Posterior vena cava (tissue), 2 donors: ENCODE measurements at regions of chr3 and their contacts with region 1.

Region 1: DNA sequence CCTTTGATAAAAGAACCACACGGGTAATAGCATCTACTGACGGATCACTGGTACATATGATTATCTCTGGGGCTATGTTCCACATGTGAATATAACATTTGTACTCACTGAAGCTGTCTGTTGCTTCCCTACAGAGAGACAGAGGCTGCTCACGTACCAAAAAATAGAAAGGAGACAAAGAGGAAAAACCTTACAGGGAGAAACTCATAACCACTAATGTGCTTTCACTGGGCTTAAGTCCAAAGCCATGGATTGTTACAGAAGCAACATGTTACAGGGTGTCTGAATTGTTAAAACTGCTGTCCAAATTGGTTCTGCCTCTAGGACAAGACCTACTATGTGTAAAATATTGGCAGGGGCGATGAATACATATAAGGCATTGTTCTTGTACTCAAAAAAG is 311.9 kb downstream of the FOXP1 start:
- DNase-seq: no peak

Region 2: DNA sequence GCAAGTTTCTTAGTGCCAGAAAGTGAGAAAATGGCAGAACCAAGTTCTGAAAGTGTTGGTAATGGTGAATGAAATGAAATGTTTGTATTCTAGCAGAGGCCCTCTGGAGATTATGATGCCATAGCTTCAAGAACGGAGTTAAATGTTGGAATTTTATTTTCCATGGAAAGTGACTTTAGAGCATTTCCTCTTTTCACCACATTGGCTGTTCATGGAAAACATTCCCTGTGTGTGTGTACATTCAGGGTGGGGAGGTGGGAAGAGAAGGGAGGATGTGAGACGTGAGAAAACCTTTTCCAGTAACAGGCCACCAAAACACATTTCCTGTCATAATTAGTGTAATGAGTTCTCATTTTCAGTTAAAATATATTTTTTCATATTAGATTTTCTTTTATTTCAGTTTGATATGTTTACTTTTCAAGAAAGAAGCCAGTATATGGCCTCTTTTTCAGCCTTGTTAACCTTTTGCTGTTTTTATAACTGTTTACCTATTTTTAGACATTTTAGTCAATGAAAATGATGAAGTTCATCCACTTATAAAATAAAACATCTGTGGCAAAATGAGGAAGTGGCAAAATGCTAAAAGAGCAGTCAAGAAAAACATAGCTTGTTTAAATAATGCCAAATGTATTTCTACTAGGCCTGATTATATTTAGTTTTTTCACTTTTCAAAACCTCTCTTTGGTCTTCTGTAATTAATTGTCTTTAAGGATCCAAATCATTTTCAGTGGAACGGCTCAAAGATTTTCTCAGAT is 1250.5 kb before region 1 on chr3:
- intact Hi-C with region 1: no loop called
- DNase-seq: no peak

Region 3: GRCh38 chr3:71229905-71230657 is 41.5 kb before region 1 on chr3:
- intact Hi-C with region 1: loop called in 1 of 2 experiments (anchors 1 kb)
- DNase-seq: no peak

Region 4: DNA sequence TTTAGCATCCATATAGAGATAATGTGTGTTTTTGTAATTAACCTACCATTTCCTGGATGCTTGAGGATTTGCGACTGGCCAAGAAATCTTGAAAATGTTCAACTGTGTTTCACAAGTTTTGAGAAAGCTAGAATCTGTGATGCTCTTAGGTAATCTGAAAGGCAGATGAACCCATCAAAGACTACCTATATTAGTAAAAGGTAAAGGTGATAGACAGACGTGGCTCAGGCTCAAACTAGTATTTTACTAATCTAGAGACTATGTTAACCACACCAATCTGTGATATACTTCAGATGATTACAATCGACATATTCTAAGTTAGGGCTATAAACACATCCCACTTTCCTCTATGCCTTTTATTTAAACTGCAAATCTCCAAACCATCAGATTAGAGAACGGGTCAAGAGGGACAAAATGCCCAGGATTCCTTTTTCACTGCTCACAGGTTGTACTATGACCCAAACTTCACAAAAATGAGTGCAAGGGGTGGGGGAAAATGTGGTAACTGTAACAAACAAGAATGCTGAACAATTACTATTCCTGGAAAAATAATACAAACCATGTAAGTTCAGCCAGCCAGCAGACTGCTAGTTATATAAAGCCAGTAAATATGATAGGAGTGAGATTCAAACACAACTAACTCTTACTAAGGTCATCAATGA is 16.8 kb after region 1 on chr3:
- intact Hi-C with region 1: loop called in 1 of 2 experiments (anchors 1 kb)
- DNase-seq: no peak

Region 5: DNA sequence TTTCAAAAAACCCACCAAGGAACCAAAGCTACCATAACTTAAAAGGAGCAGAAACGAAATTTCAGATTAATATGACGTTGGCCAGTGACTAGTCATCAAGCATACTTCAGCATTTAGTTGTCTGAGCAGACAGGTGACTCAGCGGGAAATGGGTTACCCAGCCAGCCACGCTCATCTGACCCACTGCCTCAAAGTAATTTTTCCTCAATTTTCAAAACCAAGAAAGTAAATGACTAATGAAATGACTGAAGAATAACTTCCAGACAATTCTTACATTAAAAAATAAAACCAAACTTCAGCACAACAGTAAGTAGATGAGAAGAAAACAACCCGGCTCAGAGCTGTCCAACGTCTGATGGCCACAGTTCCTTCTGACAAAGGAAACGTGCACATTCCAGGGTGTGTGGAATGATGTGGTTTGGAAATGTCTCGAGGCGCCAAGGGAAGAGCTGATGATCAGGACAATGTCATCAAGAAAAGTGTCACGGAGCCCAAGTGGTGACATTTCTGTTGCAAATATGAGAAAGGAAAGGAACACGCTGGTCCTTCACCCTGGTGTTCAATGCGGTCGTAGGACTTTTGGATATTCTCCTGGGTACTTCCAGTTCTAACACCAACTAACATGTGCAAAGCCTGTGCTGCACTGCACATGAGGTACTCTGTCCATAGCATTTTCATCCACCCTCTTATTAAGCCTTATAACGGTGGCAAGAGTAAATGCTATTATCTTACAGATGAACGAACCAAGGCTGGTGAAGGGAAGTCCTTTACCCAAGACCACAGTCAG is 232.8 kb after region 1 on chr3:
- intact Hi-C with region 1: no loop called
- DNase-seq: no peak